ENCODE measurements at regions of chr11 and their contacts with region 1.

Region 1: GRCh38 chr11:14148653-14149273 is 186.2 kb downstream of the SPON1 start:
- DNase-seq: no peak
- ATAC-seq: peak in 3 of 4 donors; percentile 65 to 75 (median 74)
- H3K4me3 ChIP-seq: no peak overlapping the region
- H3K27ac ChIP-seq: no peak overlapping the region
- H3K4me1 ChIP-seq: no peaks in the 10 kb centered on the region
- H3K27me3 ChIP-seq: peaks cover 0 to 11% (median 0%) of the 10 kb centered on the region in 9 donors
- CTCF ChIP-seq: peak; percentile 39 to 73 (median 60)
- POLR2A ChIP-seq: no peak

Region 2: GRCh38 chr11:13486926-13487660 is 661.7 kb before region 1 on chr11:
- intact Hi-C with region 1: no loop called
- DNase-seq: peak; percentile 32 to 81 (median 46)
- ATAC-seq: peak in 3 of 4 donors; percentile 59 to 91 (median 89)
- H3K4me3 ChIP-seq: peak overlapping the region in 7 of 12 donors; percentile 25 to 45 (median 35)
- H3K27ac ChIP-seq: peak overlapping the region in 1 of 12 donors; percentile 27
- H3K4me1 ChIP-seq: no peaks in the 10 kb centered on the region
- H3K27me3 ChIP-seq: peaks cover 0 to 6% (median 0%) of the 10 kb centered on the region in 9 donors
- CTCF ChIP-seq: peak in 11 of 12 donors; percentile 6 to 61 (median 35)
- POLR2A ChIP-seq: no peak

Region 3: GRCh38 chr11:13772223-13773046 is 376.3 kb before region 1 on chr11:
- intact Hi-C with region 1: loop called in 5 of 10 experiments (anchors 5 to 10 kb)
- DNase-seq: peak in 1 of 5 donors; percentile 18
- ATAC-seq: peak in 2 of 4 donors; percentile 48 to 51
- H3K4me3 ChIP-seq: no peak overlapping the region
- H3K27ac ChIP-seq: no peak overlapping the region
- H3K4me1 ChIP-seq: no peaks in the 10 kb centered on the region
- H3K27me3 ChIP-seq: peaks cover 0 to 45% (median 5%) of the 10 kb centered on the region in 9 donors
- CTCF ChIP-seq: peak; percentile 14 to 60 (median 44)
- POLR2A ChIP-seq: no peak

Region 4: DNA sequence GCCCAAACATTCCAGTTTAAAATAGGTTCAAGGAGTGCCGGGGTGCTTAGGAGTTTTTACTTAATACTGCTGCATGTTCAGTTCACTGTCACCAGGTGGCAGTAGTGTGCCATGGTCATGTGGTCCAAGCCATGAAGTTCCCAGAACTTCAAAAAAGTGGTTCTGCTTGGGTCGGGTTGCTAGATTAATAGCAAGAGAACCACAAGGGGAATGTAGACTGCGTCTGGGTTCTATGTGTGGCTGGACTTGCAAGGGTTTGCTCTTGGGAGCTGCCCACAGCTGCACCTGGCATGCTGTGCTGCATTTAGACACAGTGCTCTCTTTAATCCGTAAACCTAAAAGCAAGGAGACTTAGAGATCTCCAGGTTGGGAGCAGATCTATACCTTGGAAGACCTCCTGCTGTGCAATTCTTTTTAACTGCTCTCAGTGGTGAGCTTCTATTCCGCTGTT is 192.8 kb before region 1 on chr11:
- intact Hi-C with region 1: loop called (anchors 1 to 5 kb)
- DNase-seq: peak in 4 of 5 donors; percentile 41 to 57 (median 50)
- ATAC-seq: peak in 3 of 4 donors; percentile 44 to 84 (median 62)
- H3K4me3 ChIP-seq: no peak overlapping the region
- H3K27ac ChIP-seq: no peak overlapping the region
- H3K4me1 ChIP-seq: peaks cover 0 to 5% (median 0%) of the 10 kb centered on the region in 12 donors
- H3K27me3 ChIP-seq: peaks cover 0 to 62% (median 11%) of the 10 kb centered on the region in 9 donors
- CTCF ChIP-seq: peak; percentile 80 to 90 (median 85)
- POLR2A ChIP-seq: no peak

Region 5: GRCh38 chr11:13970986-13971385 is 177.8 kb before region 1 on chr11:
- intact Hi-C with region 1: loop called in 3 of 10 experiments (anchors 5 kb)
- DNase-seq: peak in 2 of 5 donors; percentile 28 to 54
- ATAC-seq: peak in 3 of 4 donors; percentile 40 to 52 (median 49)
- H3K4me3 ChIP-seq: no peak overlapping the region
- H3K27ac ChIP-seq: no peak overlapping the region
- H3K4me1 ChIP-seq: peaks cover 0 to 23% (median 12%) of the 10 kb centered on the region in 12 donors
- H3K27me3 ChIP-seq: peaks cover 0 to 38% (median 15%) of the 10 kb centered on the region in 9 donors
- CTCF ChIP-seq: peak in 8 of 12 donors; percentile 10 to 45 (median 22)
- POLR2A ChIP-seq: no peak

Region 6: DNA sequence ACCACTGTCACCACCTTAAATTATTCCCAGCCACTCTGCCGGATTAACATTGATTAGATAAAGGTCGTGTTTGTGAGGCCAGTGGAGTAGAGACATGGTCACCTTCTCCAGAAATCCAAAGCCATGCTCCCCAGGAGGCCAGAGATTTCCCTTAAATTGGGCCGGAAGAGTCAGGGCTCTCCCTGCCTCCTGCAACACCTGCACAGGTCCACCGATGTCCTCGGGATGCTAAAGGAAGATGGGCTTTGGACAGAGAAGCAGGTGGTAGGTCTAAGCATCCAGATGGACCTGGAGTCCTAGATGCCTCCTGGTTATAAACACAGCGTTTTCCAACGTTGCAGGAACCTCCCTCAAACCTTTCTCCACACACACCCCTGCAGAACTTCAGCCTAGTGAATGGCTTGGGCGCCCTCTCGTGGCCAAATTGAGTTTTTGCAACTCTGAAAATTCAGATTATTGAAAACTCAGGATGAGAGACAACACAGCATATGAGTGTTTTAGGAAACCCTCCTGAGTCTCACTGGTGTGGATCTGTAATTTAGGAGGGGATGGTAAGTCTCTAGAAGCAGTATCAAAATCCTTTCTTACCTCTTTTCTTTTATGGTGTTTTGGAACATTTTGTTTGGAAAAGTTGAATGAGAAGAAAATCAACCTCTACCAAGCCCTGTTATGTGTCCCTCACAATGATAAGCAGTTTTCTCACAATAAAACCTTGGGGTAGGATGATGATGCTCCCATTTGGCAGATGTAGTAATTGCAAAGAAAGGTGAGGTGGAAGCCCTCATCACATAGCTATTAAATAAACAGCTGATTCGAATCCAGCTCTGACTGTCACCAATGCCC is 100.6 kb after region 1 on chr11:
- intact Hi-C with region 1: loop called in 3 of 10 experiments (anchors 5 to 10 kb)
- DNase-seq: peak in 4 of 5 donors; percentile 37 to 75 (median 53)
- ATAC-seq: peak in 3 of 4 donors; percentile 49 to 64 (median 51)
- H3K4me3 ChIP-seq: no peak overlapping the region
- H3K27ac ChIP-seq: no peak overlapping the region
- H3K4me1 ChIP-seq: peaks cover 0 to 20% (median 2%) of the 10 kb centered on the region in 12 donors
- H3K27me3 ChIP-seq: peaks cover 0 to 43% (median 2%) of the 10 kb centered on the region in 9 donors
- CTCF ChIP-seq: peak; percentile 80 to 93 (median 90)
- POLR2A ChIP-seq: no peak